Colonic mucosa (tissue), 4 donors: ENCODE measurements at regions of chr16 and their contacts with region 1.

Region 1: GRCh38 chr16:68902008-68902968 is 59.0 kb downstream of the TANGO6 start:
- DNase-seq: peak; percentile 70
- H3K4me3 ChIP-seq: no peak overlapping the region
- H3K27ac ChIP-seq: no peak overlapping the region
- H3K4me1 ChIP-seq: no peaks in the 10 kb centered on the region
- H3K27me3 ChIP-seq: no peaks in the 10 kb centered on the region
- CTCF ChIP-seq: peak; percentile 53

Region 2: GRCh38 chr16:67883872-67884261 is 1018.4 kb before region 1 on chr16:
- intact Hi-C with region 1: no loop called
- DNase-seq: peak; percentile 64
- H3K4me3 ChIP-seq: no peak overlapping the region
- H3K27ac ChIP-seq: no peak overlapping the region
- H3K4me1 ChIP-seq: no peaks in the 10 kb centered on the region
- H3K27me3 ChIP-seq: no peaks in the 10 kb centered on the region
- CTCF ChIP-seq: peak; percentile 92

Region 3: GRCh38 chr16:69105489-69106361 is 203.4 kb after region 1 on chr16 and contains the start of gene HAS3:
- intact Hi-C with region 1: loop called (anchors 5 kb)
- DNase-seq: peak; percentile 63
- H3K4me3 ChIP-seq: peak within 1 kb of the TSS; percentile 54
- H3K27ac ChIP-seq: no peak within 1 kb of the TSS
- H3K4me1 ChIP-seq: peaks cover 13% of the 10 kb centered on the region
- H3K27me3 ChIP-seq: no peaks in the 10 kb centered on the region
- CTCF ChIP-seq: no peak
- total RNA-seq, gene HAS3: 5.1 to 19.9 TPM

Region 4: GRCh38 chr16:69123910-69124309 is 221.6 kb after region 1 on chr16:
- intact Hi-C with region 1: loop called (anchors 5 kb)
- DNase-seq: peak; percentile 70
- H3K4me3 ChIP-seq: no peak overlapping the region
- H3K27ac ChIP-seq: no peak overlapping the region
- H3K4me1 ChIP-seq: no peaks in the 10 kb centered on the region
- H3K27me3 ChIP-seq: no peaks in the 10 kb centered on the region
- CTCF ChIP-seq: peak; percentile 61